Left cardiac atrium (tissue), 4 donors: ENCODE measurements at regions of chr19 and their contacts with region 1.

Region 1: DNA sequence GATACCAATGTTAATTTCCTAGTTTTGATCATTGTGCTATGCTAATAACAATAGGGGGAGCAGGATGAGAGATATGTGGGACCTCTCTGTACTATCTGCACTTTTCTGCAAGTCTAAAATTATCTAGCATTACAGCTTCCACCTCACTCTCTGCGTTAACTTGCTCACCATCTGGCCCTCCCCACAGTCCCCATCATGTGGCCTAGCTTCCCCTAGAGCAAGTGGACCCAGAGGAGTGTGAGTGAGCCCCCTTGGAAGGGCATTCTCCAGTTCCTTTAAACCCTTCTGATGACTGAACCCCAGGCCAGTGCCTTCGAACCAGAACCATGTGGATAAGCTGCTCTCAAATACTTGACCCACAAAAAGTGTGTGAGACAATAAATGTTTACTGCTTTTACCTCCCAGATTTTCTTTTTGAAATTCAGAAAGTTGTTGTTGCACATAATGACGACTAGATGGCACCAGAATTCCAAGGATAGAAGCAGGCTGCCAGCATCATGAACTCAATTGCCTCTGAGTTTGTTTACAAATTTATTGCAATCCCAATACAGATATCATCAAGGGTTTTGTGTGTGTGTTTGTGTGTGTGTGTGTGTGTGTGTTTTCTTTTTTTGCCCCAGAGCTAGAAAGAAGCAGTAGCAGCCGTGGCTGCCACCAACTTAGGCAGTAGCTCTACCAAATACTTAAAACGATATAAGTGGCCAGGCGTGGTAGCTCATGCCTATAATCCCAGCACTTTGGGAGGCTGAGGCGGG is 49.0 kb upstream of the ZNF780A start:
- DNase-seq: no peak
- ATAC-seq: no peak

Region 2: GRCh38 chr19:40221858-40222837 is 82.4 kb after region 1 on chr19:
- intact Hi-C with region 1: loop called (anchors 2 to 5 kb)
- DNase-seq: peak; percentile 79
- ATAC-seq: peak; percentile 75 to 76

Region 3: DNA sequence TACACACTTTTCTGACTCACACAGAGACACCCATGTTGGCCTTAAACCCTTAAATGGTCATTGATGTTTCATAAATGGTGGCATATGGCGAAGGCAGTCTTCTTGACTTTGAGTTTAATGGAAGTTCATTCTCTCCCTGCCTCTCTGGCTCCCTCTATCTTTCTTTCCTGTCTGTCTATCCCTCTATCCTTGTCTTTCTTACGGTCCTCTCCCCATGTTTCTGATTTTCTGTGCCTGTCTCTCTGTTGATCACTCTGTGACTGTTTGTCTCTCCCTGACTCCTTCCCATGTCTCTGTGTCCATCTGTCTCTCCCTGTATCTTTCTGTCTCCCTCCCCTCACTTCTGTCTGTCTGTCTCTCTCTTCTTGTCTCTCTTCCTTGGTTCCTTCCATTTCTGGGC is 393.8 kb after region 1 on chr19:
- intact Hi-C with region 1: no loop called
- DNase-seq: no peak
- ATAC-seq: no peak